ENCODE measurements at regions of chr10 and their contacts with region 1.

Region 1: DNA sequence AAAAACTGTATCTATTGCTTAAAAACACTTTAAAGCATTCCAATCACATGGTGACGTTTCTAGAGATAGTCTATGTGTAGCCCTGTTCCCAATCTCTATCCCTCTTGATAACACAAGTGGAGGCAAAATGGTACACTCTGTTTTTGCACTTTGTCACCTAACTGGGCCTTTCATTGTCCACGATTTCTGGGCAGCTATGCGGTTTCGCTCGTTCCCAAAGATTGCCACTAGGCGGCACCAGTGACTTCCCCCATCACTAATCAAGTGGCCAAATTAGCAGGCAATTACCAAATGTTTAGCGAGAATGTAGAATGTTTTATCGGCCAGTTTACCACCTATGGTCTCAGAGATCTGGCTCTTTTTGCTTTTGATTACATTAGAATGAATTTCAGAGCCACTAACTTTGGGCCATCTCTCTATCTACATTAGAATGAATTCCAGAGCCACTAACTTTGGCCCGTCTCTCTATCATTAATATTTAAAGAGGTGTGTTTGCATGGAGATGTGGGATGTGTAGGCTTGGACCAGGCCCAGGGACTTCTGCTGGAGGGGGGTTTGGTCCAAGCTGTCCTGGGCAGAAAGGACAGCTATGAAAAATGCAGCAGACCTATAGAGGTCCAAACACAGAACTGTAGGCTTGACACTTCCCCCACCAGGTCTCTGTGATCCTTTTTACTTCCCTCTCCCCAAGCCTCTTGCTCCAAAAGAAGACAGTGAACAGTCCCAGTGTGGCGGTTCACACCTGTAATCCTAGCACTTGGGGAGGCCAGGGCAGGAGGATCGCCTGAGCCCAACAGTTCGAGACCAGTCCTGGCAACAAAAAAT is 90.1 kb downstream of the EPC1 start:
- DNase-seq: peak; percentile 40
- ATAC-seq: peak; percentile 75
- H3K4me3 ChIP-seq: 0 out of 6 replicates have a peak overlapping the region, but pooled peaks of 1 of the 3 experiments have one; percentile 4
- H3K27ac ChIP-seq: no peak overlapping the region
- H3K4me1 ChIP-seq: peaks cover 11% of the 10 kb centered on the region; the same call in 1 of the 2 replicates
- H3K27me3 ChIP-seq: no peaks in the 10 kb centered on the region
- CTCF ChIP-seq: peak; percentile 88
- EP300 ChIP-seq: no peak
- POLR2A ChIP-seq: no peak
- RAD21 ChIP-seq: no peak

Region 2: GRCh38 chr10:31847515-31847914 is 409.3 kb before region 1 on chr10:
- CTCF ChIA-PET with region 1: no interaction called
- POLR2A ChIA-PET with region 1: no interaction called
- in situ Hi-C with region 1: no loop called
- intact Hi-C with region 1: no loop called
- DNase-seq: no peak
- ATAC-seq: no peak; the same call in 2 of the 3 replicates
- H3K4me3 ChIP-seq: no peak overlapping the region
- H3K27ac ChIP-seq: no peak overlapping the region
- H3K4me1 ChIP-seq: peaks cover 7% of the 10 kb centered on the region; the same call in 1 of the 2 replicates
- H3K27me3 ChIP-seq: no peaks in the 10 kb centered on the region
- CTCF ChIP-seq: no peak
- EP300 ChIP-seq: no peak
- POLR2A ChIP-seq: no peak
- RAD21 ChIP-seq: no peak

Region 3: GRCh38 chr10:32367793-32368453 is 111.1 kb after region 1 on chr10:
- CTCF ChIA-PET with region 1: interaction called, 22 read pairs
- POLR2A ChIA-PET with region 1: no interaction called
- in situ Hi-C with region 1: loop called (anchors 5 kb)
- intact Hi-C with region 1: loop called (anchors 2 kb)
- DNase-seq: peak; percentile 54
- ATAC-seq: peak; percentile 62
- H3K4me3 ChIP-seq: no peak overlapping the region
- H3K27ac ChIP-seq: no peak overlapping the region
- H3K4me1 ChIP-seq: peaks cover 13% of the 10 kb centered on the region
- H3K27me3 ChIP-seq: no peaks in the 10 kb centered on the region
- CTCF ChIP-seq: peak; percentile 79
- EP300 ChIP-seq: no peak
- POLR2A ChIP-seq: no peak
- RAD21 ChIP-seq: peak; percentile 53; the same call in 1 of the 2 replicates

Region 4: DNA sequence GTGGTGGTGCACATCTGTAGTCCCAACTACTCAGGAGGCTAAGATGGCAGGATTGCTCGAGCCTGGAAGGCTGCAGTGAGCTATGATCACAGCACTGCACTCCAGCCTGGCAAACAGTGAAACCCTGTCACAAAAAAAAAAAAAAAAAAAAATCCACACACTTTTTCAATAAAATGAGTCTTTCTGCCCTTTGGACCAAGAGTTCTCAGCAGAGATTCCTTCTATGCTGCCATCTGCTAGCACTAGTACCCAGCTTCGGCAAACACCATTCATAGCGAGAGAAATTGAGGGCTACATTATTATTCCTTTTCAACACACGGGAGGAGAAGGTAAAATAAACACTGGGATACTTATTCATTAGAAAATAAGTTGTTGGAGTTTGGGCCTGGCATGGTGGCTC is 145.7 kb after region 1 on chr10:
- CTCF ChIA-PET with region 1: no interaction called
- POLR2A ChIA-PET with region 1: no interaction called
- in situ Hi-C with region 1: no loop called
- intact Hi-C with region 1: no loop called
- DNase-seq: peak; percentile 35
- ATAC-seq: peak; percentile 58
- H3K4me3 ChIP-seq: no peak overlapping the region
- H3K27ac ChIP-seq: no peak overlapping the region
- H3K4me1 ChIP-seq: peaks cover 21% of the 10 kb centered on the region
- H3K27me3 ChIP-seq: no peaks in the 10 kb centered on the region
- CTCF ChIP-seq: no peak
- EP300 ChIP-seq: no peak
- POLR2A ChIP-seq: no peak
- RAD21 ChIP-seq: no peak

Measured in HepG2 (cell line).